Sigmoid colon (tissue), 7 donors: ENCODE measurements at regions of chr5 and their contacts with region 1.

Region 1: DNA sequence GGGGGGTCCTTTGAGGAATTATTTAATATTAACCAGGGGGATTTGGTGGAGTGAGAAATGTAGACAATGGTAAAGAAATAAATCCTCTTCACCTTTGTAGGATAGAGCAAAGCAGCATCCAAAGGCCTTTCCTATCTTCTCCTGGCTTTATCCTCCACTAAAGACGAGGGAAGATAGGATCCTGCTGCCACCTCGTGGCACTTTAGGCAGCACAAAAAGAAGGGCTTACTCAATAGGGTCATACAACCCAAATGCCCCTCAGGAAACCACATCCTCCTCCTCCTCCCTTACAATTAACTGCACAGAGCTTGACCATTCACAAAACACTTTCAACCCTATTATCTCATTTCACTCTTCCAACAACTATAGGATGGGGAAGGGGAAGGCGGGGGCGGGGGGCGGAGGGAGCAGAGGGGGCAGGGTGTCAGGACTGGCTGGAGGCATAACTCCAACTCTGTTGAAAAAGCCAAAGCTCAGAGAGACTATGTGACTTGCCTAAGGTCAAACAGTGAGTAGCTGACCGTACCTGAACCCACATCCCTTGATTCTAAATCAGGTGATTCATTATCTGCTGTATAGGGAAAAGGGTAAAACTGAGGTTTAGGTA is 45.4 kb upstream of the MYOT start:
- DNase-seq: no peak
- H3K4me3 ChIP-seq: no peak overlapping the region
- H3K27ac ChIP-seq: no peak overlapping the region
- H3K4me1 ChIP-seq: no peaks in the 10 kb centered on the region
- H3K27me3 ChIP-seq: no peaks in the 10 kb centered on the region
- CTCF ChIP-seq: peak; percentile 25 to 58 (median 27)
- EP300 ChIP-seq: no peak
- POLR2A ChIP-seq: no peak

Region 2: DNA sequence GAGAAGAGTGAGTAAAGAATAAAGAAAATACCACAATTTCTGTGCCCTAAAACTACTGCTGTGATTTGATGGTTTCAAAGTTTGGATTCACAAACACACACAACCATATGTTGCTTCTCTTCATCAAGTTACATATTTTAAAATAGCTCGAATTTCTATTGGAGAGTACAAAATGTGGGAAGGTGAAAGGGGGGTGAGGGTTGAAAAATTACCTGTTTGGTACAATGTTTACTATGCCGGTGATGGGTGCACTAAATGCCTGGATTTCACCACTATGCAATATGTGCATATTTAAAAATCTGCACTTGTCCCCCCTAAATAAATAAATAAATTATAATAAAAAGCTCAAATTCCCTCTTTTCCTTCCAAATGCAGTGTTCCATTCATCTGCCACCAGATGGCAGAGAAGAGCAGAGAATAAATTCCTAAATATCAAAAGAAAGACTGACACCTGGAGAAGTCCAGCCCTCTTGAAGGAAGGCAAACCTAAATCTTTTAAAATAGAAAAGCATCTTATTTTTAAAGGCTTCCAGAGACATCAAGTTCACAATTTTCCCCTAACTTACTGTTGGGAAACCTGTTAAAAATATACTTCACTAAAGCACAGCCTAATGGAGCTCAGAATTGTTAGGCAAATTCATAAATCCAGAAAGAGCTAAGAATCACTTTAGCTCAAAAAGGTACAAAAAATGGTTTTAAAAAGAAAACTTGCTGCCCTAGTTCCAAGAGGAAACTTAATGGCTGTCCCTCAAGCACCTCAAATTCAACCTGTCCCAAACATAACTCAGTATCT is 43.3 kb before region 1 on chr5:
- intact Hi-C with region 1: loop called (anchors 2 kb)
- DNase-seq: no peak
- H3K4me3 ChIP-seq: no peak overlapping the region
- H3K27ac ChIP-seq: no peak overlapping the region
- H3K4me1 ChIP-seq: no peaks in the 10 kb centered on the region
- H3K27me3 ChIP-seq: no peaks in the 10 kb centered on the region
- CTCF ChIP-seq: peak; percentile 37 to 78 (median 76)
- EP300 ChIP-seq: no peak
- POLR2A ChIP-seq: no peak